ENCODE measurements at regions of chr6 and their contacts with region 1.

Region 1: DNA sequence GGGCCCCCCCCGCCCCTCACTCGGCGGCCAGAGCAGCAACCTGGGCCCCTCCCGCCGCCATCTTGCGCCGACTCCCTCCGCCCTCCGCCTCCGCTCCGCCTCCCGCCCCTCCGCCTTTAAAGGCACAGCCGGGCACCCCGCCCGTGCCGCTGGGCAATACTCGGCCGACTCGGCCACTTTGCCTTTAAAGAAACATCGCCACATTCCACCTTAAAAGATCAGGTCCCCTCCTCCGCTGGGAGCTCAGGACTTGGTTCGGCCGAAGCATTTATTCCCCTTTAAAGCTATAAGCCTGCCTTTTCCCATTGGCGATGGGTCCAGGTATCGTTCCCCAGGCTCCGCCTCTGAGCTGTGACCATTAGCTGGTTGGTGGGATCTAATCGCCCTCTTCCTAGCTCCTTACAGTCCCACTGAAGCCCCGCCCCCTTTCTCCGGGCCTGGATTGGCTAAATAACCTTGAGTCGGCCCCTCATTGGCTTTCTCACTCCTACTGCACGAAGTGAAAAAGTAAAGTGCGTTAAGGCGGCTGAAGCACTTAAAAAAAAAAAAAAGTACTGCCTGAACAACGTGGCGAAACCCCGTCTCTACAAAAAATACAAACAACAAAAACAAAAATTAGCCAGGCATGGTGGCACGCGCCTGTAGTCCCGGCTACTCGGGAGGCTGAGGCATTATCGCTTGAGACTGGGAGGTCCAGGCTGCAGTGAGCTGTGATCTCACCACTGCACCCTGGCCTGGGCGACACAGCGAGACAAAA is at the start of gene ZBTB22:
- DNase-seq: peak; percentile 100
- H3K4me3 ChIP-seq: peak within 1 kb of the TSS; percentile 45
- H3K27ac ChIP-seq: peak within 1 kb of the TSS; percentile 88
- H3K4me1 ChIP-seq: peaks cover 25% of the 10 kb centered on the region
- H3K27me3 ChIP-seq: no peaks in the 10 kb centered on the region
- CTCF ChIP-seq: no peak
- total RNA-seq, gene ZBTB22: 12.4 to 16.9 TPM

Region 2: GRCh38 chr6:33276864-33277662 is 40.8 kb before region 1 on chr6 and contains the start of gene B3GALT4:
- intact Hi-C with region 1: loop called (anchors 2 kb)
- DNase-seq: peak; percentile 93
- H3K4me3 ChIP-seq: peak within 1 kb of the TSS; percentile 64
- H3K27ac ChIP-seq: peak within 1 kb of the TSS; percentile 94
- H3K4me1 ChIP-seq: peaks cover 36% of the 10 kb centered on the region
- H3K27me3 ChIP-seq: no peaks in the 10 kb centered on the region
- CTCF ChIP-seq: peak; percentile 50
- total RNA-seq, gene B3GALT4: 22.0 to 26.4 TPM

Region 3: DNA sequence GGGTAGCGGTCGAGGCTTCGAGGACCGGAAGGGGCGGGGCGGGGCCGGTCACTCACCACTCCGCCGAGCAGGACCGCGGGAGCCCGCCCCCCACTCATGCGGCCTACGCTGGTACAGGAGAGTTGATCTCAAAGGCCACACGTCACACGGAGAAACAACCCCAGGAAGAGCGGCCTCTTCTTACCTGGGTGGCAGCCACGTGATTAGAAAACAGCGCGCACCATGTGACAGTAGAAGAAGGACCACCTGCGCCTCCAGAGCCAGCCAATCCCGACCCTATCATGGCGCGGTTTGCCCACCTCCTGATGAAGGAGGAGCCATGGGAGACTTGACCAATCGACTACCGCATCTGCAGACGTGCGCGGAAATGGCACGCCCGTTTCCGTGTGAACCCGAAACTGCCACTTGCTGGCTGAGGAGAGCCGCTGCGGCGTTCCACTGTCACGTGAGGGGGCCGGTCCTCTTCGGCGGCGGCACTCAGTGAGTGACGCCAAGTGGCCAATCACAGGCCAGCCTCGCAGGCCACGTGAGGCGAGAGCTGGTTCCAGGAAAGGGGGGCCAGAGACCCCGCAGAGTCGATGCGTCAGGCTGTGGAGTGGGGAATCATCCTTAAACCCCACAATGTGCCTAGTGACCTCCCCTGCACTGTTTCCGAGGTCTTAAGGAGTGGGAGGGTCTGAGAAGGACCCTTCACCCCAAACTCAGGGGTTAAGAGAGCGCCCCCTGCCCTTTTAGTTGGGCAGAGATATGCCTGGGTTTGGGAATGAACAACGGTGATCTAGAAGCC is 100.2 kb after region 1 on chr6 and contains the start of gene CUTA:
- intact Hi-C with region 1: loop called (anchors 10 kb)
- DNase-seq: peak; percentile 98
- H3K4me3 ChIP-seq: peak within 1 kb of the TSS; percentile 67
- H3K27ac ChIP-seq: peak within 1 kb of the TSS; percentile 79
- H3K4me1 ChIP-seq: peaks cover 7% of the 10 kb centered on the region
- H3K27me3 ChIP-seq: no peaks in the 10 kb centered on the region
- CTCF ChIP-seq: no peak
- total RNA-seq, gene CUTA: 145 to 172 TPM

Measured in colonic mucosa (tissue), 4 donors.